K562 (cell line): ENCODE measurements at regions of chr16 and their contacts with region 1.

Region 1: DNA sequence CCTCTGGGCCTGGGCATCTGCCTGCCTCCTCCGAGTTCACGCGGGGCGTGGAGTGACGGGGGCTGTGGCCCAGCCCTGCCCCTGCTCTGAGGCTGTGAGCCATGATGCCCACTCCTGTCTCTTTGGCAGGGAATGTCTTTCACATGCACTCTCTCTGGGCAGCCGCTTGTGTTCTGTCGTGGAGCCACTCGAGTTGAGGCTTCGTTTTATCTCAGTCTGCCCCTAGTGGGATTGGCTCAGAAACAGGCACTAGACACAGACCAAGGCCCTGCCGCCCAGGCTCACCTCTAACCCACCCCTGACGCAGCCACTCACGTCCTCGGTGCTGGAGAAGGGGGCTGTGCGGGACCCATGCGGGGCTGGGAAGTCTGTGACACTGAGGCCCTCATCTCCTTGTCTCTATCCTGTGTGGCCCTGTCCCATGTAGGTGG is 67.5 kb upstream of the KCTD5 start:
- DNase-seq: no peak
- ATAC-seq: no peak
- H3K4me3 ChIP-seq: no peak overlapping the region
- H3K27ac ChIP-seq: no peak overlapping the region
- H3K4me1 ChIP-seq: no peaks in the 10 kb centered on the region
- H3K27me3 ChIP-seq: no peaks in the 10 kb centered on the region
- CTCF ChIP-seq: no peak
- EP300 ChIP-seq: no peak
- POLR2A ChIP-seq: no peak
- RAD21 ChIP-seq: no peak

Region 2: GRCh38 chr16:2584750-2585650 is 29.8 kb before region 1 on chr16:
- CTCF ChIA-PET with region 1: no interaction called
- POLR2A ChIA-PET with region 1: no interaction called
- in situ Hi-C with region 1: loop called (anchors 5 kb)
- intact Hi-C with region 1: no loop called
- DNase-seq: no peak
- ATAC-seq: no peak
- H3K4me3 ChIP-seq: no peak overlapping the region
- H3K27ac ChIP-seq: no peak overlapping the region
- H3K4me1 ChIP-seq: peaks cover 0 to 8% of the 10 kb centered on the region in 2 experiments; a peak in 1 of 5 replicates
- H3K27me3 ChIP-seq: no peaks in the 10 kb centered on the region
- CTCF ChIP-seq: no peak
- EP300 ChIP-seq: no peak
- POLR2A ChIP-seq: no peak
- RAD21 ChIP-seq: no peak

Region 3: GRCh38 chr16:2595393-2596205 is 19.2 kb before region 1 on chr16:
- CTCF ChIA-PET with region 1: no interaction called
- POLR2A ChIA-PET with region 1: no interaction called
- in situ Hi-C with region 1: no loop called
- intact Hi-C with region 1: no loop called
- DNase-seq: no peak
- ATAC-seq: no peak
- H3K4me3 ChIP-seq: no peak overlapping the region
- H3K27ac ChIP-seq: no peak overlapping the region
- H3K4me1 ChIP-seq: peaks cover 0 to 8% of the 10 kb centered on the region in 2 experiments; a peak in 1 of 5 replicates
- H3K27me3 ChIP-seq: no peaks in the 10 kb centered on the region
- CTCF ChIP-seq: no peak
- EP300 ChIP-seq: no peak
- POLR2A ChIP-seq: no peak
- RAD21 ChIP-seq: no peak

Region 4: GRCh38 chr16:2673066-2673999 is 58.6 kb after region 1 on chr16:
- CTCF ChIA-PET with region 1: no interaction called
- POLR2A ChIA-PET with region 1: no interaction called
- in situ Hi-C with region 1: no loop called
- intact Hi-C with region 1: no loop called
- DNase-seq: peak; percentile 94 to 95 (median 95)
- ATAC-seq: peak; percentile 98
- H3K4me3 ChIP-seq: peak overlapping the region; percentile 63
- H3K27ac ChIP-seq: peak overlapping the region; percentile 72
- H3K4me1 ChIP-seq: peaks cover 3 to 16% of the 10 kb centered on the region in 2 experiments; a peak in 4 of 5 replicates
- H3K27me3 ChIP-seq: no peaks in the 10 kb centered on the region
- CTCF ChIP-seq: no peak
- EP300 ChIP-seq: no peak
- POLR2A ChIP-seq: peak; percentile 60; the same call in 1 of the 2 replicates
- RAD21 ChIP-seq: no peak

Region 5: GRCh38 chr16:2692948-2693651 is 78.3 kb after region 1 on chr16:
- CTCF ChIA-PET with region 1: no interaction called
- POLR2A ChIA-PET with region 1: no interaction called
- in situ Hi-C with region 1: loop called (anchors 5 kb)
- intact Hi-C with region 1: no loop called
- DNase-seq: peak in 3 of 4 experiments; percentile 25 to 50 (median 48)
- ATAC-seq: peak; percentile 73
- H3K4me3 ChIP-seq: no peak overlapping the region
- H3K27ac ChIP-seq: no peak overlapping the region
- H3K4me1 ChIP-seq: peaks cover 0 to 34% of the 10 kb centered on the region in 2 experiments; a peak in 2 of 5 replicates
- H3K27me3 ChIP-seq: no peaks in the 10 kb centered on the region
- CTCF ChIP-seq: no peak
- EP300 ChIP-seq: no peak
- POLR2A ChIP-seq: 0 out of 2 replicates have a peak, but pooled peaks have one; percentile 28
- RAD21 ChIP-seq: no peak